CD14-positive monocyte (primary cell): ENCODE measurements at regions of chr12 and their contacts with region 1.

Region 1: GRCh38 chr12:2877047-2877952 is at the starts of genes FOXM1 and RHNO1:
- DNase-seq: peak; percentile 76 to 83 (median 81)
- H3K4me3 ChIP-seq: peak within 1 kb of the TSS; percentile 87 to 99 (median 94)
- H3K4me3 Mint-ChIP-seq: peak within 1 kb of the TSS; percentile 93 to 98
- H3K27ac ChIP-seq: peak within 1 kb of the TSS; percentile 88 to 96
- H3K27ac Mint-ChIP-seq: peak within 1 kb of the TSS; percentile 84 to 97 (median 95)
- H3K4me1 ChIP-seq: peaks cover 30 to 31% of the 10 kb centered on the region in 2 donors
- H3K4me1 Mint-ChIP-seq: peaks cover 32% of the 10 kb centered on the region
- H3K27me3 ChIP-seq: no peaks in the 10 kb centered on the region
- H3K27me3 Mint-ChIP-seq: peaks cover 0 to 2% (median 0%) of the 10 kb centered on the region in 3 donors
- CTCF ChIP-seq: no peak
- polyA plus RNA-seq, gene FOXM1: 0.03 TPM in 1 of 3 donors, not detected in the others
- polyA plus RNA-seq, gene RHNO1: 10.2 to 24.7 (median 19.8) TPM

Region 2: GRCh38 chr12:2794736-2795289 is 82.5 kb before region 1 on chr12 and contains the start of gene FKBP4:
- intact Hi-C with region 1: loop called in 1 of 2 experiments (anchors 5 kb)
- DNase-seq: peak; percentile 61 to 66 (median 63)
- H3K4me3 ChIP-seq: peak within 1 kb of the TSS; percentile 74 to 95 (median 86)
- H3K4me3 Mint-ChIP-seq: peak within 1 kb of the TSS; percentile 98 to 99
- H3K27ac ChIP-seq: peak within 1 kb of the TSS in 1 of 2 donors; percentile 36
- H3K27ac Mint-ChIP-seq: peak within 1 kb of the TSS in 1 of 7 donors; percentile 74
- H3K4me1 ChIP-seq: peaks cover 15 to 28% of the 10 kb centered on the region in 2 donors
- H3K4me1 Mint-ChIP-seq: peaks cover 22% of the 10 kb centered on the region
- H3K27me3 ChIP-seq: peaks cover 8 to 22% of the 10 kb centered on the region in 2 donors
- H3K27me3 Mint-ChIP-seq: peaks cover 18 to 27% (median 19%) of the 10 kb centered on the region in 3 donors
- CTCF ChIP-seq: no peak
- polyA plus RNA-seq, gene FKBP4: 19.3 to 22.1 (median 20.1) TPM

Region 3: DNA sequence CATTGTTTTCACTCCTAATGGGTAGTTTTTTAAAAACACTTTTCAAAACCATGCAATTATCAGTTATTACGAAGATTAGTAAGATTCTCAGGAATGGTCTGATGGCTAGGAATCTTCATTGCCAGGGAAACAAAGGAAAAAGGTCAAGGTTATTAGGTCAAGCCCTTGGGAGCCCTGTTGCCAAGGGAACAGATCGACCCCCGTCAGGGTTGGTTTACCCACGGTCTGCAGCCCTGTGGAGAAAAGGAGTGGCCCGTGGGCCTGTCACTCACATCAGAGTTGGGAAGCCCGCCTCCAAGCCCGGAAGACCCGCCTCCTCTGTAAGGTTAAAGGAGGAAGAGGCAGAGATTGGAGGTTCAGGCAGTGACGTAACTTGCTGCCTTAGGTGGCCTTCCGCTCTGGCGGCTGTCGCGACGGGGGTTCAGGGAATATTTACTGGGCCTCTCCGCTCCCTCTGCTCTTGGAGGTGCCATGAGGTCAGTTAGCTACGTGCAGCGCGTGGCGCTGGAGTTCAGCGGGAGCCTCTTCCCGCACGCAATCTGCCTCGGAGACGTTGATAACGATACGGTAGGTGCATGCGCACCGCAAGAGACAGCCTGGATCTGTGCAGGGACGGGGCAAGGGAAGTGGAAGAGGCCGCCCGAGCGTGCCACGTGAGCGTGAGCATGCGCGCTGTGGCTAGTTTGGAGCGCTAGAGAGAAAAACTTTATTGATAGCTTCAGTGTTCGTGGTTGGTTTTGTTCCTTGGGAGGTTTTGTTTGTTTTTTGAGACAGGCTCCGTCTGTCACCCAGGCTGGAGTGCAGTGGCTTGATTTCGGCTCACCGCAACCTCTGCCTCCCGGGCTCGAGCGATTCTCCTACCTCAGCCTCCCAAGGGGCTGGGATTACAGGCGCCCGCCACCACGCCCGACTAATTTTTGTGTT is 64.7 kb before region 1 on chr12 and contains the start of gene ITFG2:
- intact Hi-C with region 1: loop called (anchors 5 kb)
- DNase-seq: peak; percentile 95 to 97 (median 96)
- H3K4me3 ChIP-seq: peak within 1 kb of the TSS; percentile 41 to 81 (median 57)
- H3K4me3 Mint-ChIP-seq: peak within 1 kb of the TSS; percentile 96 to 99
- H3K27ac ChIP-seq: peak within 1 kb of the TSS; percentile 83 to 93
- H3K27ac Mint-ChIP-seq: peak within 1 kb of the TSS; percentile 99 to 100 (median 100)
- H3K4me1 ChIP-seq: peaks cover 13 to 19% of the 10 kb centered on the region in 2 donors
- H3K4me1 Mint-ChIP-seq: peaks cover 18% of the 10 kb centered on the region
- H3K27me3 ChIP-seq: no peaks in the 10 kb centered on the region
- H3K27me3 Mint-ChIP-seq: no peaks in the 10 kb centered on the region
- CTCF ChIP-seq: no peak
- polyA plus RNA-seq, gene ITFG2: 19.1 to 51.2 (median 24.0) TPM

Region 4: DNA sequence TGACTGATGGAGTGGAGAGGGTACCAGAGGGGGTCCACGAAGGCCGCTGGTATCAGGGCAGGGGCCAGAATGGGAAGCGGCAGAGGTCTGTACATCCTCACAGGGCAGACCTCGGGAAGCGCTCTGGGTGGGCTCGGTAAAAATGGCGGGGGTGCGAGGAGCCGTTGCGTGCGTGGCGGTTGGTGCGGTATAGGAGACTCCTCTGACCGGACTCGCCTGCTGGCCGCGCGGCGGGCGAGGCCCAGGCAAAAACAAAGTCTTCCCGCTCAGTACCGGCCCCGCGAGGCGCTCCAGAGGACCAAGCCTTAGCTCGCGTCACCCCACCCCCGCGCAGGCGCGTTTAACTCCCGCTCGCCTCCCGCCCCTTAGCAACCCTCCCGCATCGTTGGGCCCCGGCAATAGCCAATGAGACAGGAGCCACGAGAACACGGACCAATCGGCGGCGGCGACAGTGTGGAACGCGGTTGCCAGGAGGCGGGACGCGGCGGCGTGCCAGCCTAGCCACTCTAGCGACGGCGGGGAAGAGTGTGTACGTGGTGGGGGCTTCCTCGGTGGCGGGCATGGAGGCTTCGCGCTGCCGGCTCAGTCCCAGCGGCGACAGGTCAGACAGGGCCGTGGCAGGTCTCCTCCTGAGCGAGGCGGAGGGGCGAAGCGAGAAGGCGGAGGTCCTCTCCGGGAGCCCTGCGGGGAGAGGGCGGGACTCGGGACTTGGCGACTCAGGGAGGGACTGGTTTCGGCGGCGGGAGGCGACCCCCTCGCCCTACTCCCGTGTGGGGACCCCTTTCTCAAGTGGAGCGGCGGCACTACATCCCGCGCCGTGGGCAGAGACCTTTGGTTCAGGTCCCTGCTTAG is 13.3 kb after region 1 on chr12 and contains the start of gene TULP3:
- intact Hi-C with region 1: loop called in 1 of 2 experiments (anchors 2 kb)
- DNase-seq: peak; percentile 96
- H3K4me3 ChIP-seq: peak within 1 kb of the TSS; percentile 53 to 90 (median 81)
- H3K4me3 Mint-ChIP-seq: peak within 1 kb of the TSS; percentile 95 to 96
- H3K27ac ChIP-seq: peak within 1 kb of the TSS in 1 of 2 donors; percentile 49
- H3K27ac Mint-ChIP-seq: peak within 1 kb of the TSS; percentile 59 to 91 (median 77)
- H3K4me1 ChIP-seq: peaks cover 12 to 17% of the 10 kb centered on the region in 2 donors
- H3K4me1 Mint-ChIP-seq: peaks cover 13% of the 10 kb centered on the region
- H3K27me3 ChIP-seq: peaks cover 0 to 4% of the 10 kb centered on the region in 2 donors
- H3K27me3 Mint-ChIP-seq: peaks cover 4 to 13% (median 11%) of the 10 kb centered on the region in 3 donors
- CTCF ChIP-seq: peak; percentile 11
- polyA plus RNA-seq, gene TULP3: 1.7 to 3.6 (median 2.3) TPM

Region 5: GRCh38 chr12:2944401-2945047 is 67.2 kb after region 1 on chr12:
- intact Hi-C with region 1: no loop called
- DNase-seq: peak; percentile 4 to 14 (median 12)
- H3K4me3 ChIP-seq: no peak overlapping the region
- H3K4me3 Mint-ChIP-seq: no peak overlapping the region
- H3K27ac ChIP-seq: no peak overlapping the region
- H3K27ac Mint-ChIP-seq: no peak overlapping the region
- H3K4me1 ChIP-seq: no peaks in the 10 kb centered on the region
- H3K4me1 Mint-ChIP-seq: peaks cover 3% of the 10 kb centered on the region
- H3K27me3 ChIP-seq: no peaks in the 10 kb centered on the region
- H3K27me3 Mint-ChIP-seq: peaks cover 9 to 13% (median 11%) of the 10 kb centered on the region in 3 donors
- CTCF ChIP-seq: peak; percentile 70